Heart left ventricle (tissue), 16 donors: ENCODE measurements at regions of chr5 and their contacts with region 1.

Region 1: GRCh38 chr5:147822686-147823491 is 8.6 kb downstream of the SPINK1 start:
- DNase-seq: peak in 3 of 5 donors; percentile 29 to 44 (median 32)
- ATAC-seq: peak in 3 of 4 donors; percentile 72 to 86 (median 77)
- H3K4me3 ChIP-seq: no peak overlapping the region
- H3K27ac ChIP-seq: no peak overlapping the region
- H3K4me1 ChIP-seq: peaks cover 0 to 7% (median 0%) of the 10 kb centered on the region in 12 donors
- H3K27me3 ChIP-seq: peaks cover 0 to 5% (median 0%) of the 10 kb centered on the region in 9 donors
- CTCF ChIP-seq: peak; percentile 61 to 88 (median 82)
- POLR2A ChIP-seq: no peak

Region 2: GRCh38 chr5:147628058-147628895 is 194.6 kb before region 1 on chr5:
- intact Hi-C with region 1: loop called (anchors 1 to 5 kb)
- DNase-seq: peak in 3 of 5 donors; percentile 31 to 38 (median 37)
- ATAC-seq: peak in 3 of 4 donors; percentile 70 to 82 (median 71)
- H3K4me3 ChIP-seq: no peak overlapping the region
- H3K27ac ChIP-seq: no peak overlapping the region
- H3K4me1 ChIP-seq: no peaks in the 10 kb centered on the region
- H3K27me3 ChIP-seq: peaks cover 0 to 3% (median 0%) of the 10 kb centered on the region in 9 donors
- CTCF ChIP-seq: peak; percentile 61 to 82 (median 68)
- POLR2A ChIP-seq: no peak

Region 3: DNA sequence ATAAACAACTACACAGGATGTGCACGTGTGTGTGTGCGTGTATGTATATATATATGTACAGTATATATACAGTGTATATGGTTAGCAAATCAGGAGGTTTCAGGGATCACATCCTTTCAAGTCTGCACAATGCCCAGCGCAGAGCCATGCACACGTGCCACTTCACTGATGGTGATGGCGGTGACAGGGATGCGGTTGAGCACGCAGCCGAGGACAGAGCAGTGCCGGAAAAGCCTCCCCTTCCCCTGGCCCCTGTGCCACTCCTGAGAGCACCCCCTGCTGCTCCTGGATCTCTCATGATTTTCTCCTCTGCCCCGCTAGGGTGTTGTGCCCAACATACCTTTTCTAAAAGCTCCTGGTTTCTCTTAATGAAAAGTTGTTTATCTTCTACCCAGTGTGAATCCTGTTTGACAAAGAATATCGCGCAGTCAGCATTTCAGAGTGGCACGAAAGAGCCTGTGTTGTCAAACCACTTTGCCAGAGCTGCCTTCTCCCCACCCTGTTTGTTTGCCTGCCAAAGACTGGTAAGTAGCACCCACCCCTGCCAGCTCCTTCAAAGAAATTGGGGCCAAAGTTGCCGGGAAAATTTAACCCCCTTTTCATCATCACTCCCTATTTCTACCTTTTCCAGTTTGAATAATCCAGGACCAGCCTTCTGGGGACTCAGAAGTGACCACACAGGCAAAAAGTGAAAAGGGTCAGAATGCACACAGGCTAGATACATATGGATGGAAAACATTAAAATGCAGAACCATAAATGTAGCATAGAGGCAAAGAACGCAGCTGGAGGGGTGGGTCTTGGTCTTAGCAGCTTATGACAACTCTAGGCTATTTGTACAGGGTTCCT is 186.8 kb before region 1 on chr5:
- intact Hi-C with region 1: loop called in 1 of 10 experiments (anchors 2 kb)
- DNase-seq: no peak
- ATAC-seq: no peak
- H3K4me3 ChIP-seq: no peak overlapping the region
- H3K27ac ChIP-seq: no peak overlapping the region
- H3K4me1 ChIP-seq: no peaks in the 10 kb centered on the region
- H3K27me3 ChIP-seq: no peaks in the 10 kb centered on the region
- CTCF ChIP-seq: no peak
- POLR2A ChIP-seq: no peak